Esophagus muscularis mucosa (tissue), 4 donors: ENCODE measurements at regions of chr1 and their contacts with region 1.

Region 1: GRCh38 chr1:26602378-26602959 is 72.9 kb downstream of the RPS6KA1 start:
- DNase-seq: no peak
- H3K4me3 ChIP-seq: no peak overlapping the region
- H3K27ac ChIP-seq: peak overlapping the region in 3 of 4 donors; percentile 23 to 51 (median 36)
- H3K4me1 ChIP-seq: peaks cover 0 to 29% (median 22%) of the 10 kb centered on the region in 4 donors
- H3K27me3 ChIP-seq: no peaks in the 10 kb centered on the region
- CTCF ChIP-seq: peak; percentile 86 to 95 (median 87)
- EP300 ChIP-seq: no peak
- POLR2A ChIP-seq: no peak

Region 2: GRCh38 chr1:26500488-26501175 is 101.8 kb before region 1 on chr1:
- intact Hi-C with region 1: loop called (anchors 10 kb)
- DNase-seq: peak; percentile 95
- H3K4me3 ChIP-seq: peak overlapping the region; percentile 68 to 85 (median 72)
- H3K27ac ChIP-seq: peak overlapping the region; percentile 89 to 93 (median 90)
- H3K4me1 ChIP-seq: peaks cover 10 to 23% (median 21%) of the 10 kb centered on the region in 4 donors
- H3K27me3 ChIP-seq: no peaks in the 10 kb centered on the region
- CTCF ChIP-seq: peak in 1 of 3 experiments; percentile 20
- EP300 ChIP-seq: no peak
- POLR2A ChIP-seq: peak; percentile 18

Region 3: GRCh38 chr1:26677306-26678115 is 75.0 kb after region 1 on chr1:
- intact Hi-C with region 1: loop called (anchors 1 kb)
- DNase-seq: peak; percentile 92
- H3K4me3 ChIP-seq: peak overlapping the region in 3 of 4 donors; percentile 22 to 25 (median 23)
- H3K27ac ChIP-seq: peak overlapping the region; percentile 1 to 45 (median 30)
- H3K4me1 ChIP-seq: peaks cover 4 to 13% (median 12%) of the 10 kb centered on the region in 4 donors
- H3K27me3 ChIP-seq: no peaks in the 10 kb centered on the region
- CTCF ChIP-seq: peak; percentile 65 to 87 (median 78)
- EP300 ChIP-seq: no peak
- POLR2A ChIP-seq: no peak

Region 4: DNA sequence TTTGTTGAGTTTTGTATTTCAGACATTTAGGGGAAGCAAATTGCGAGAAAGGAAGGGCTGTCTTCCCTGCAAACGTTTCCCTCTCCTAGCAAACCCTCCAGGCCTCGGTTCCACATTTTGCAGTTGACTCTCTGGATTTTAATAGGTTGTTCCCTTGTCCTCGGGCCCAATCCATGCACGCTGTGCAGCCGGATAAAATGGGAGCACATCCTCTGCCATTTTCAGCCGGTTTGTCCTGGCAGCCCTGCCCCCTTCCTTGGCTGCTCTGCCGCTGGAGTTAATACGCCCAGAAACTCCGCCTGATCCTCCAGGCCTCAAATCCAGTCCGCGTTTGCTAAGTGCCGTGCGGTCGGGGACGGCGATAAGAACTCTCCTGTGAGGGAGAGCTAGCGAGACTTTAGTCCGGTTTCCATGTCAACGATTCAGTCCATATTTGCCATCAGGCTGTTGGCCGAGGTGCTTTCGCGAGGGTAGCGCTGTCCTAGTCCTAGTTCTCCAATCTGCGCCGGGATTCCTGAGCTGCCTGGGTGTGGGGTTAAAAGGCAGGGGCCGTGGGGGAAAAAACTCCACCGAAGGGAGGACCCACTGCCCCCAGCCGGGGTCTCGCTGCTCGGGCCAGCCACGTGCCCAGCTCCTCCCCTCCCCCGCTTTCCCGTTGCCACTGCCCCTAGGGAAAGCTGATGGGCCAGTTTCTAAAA is 90.5 kb after region 1 on chr1:
- intact Hi-C with region 1: loop called (anchors 5 kb)
- DNase-seq: peak; percentile 96
- H3K4me3 ChIP-seq: peak overlapping the region; percentile 55 to 68 (median 63)
- H3K27ac ChIP-seq: peak overlapping the region; percentile 96 to 99 (median 98)
- H3K4me1 ChIP-seq: peaks cover 24 to 41% (median 38%) of the 10 kb centered on the region in 4 donors
- H3K27me3 ChIP-seq: peaks cover 0 to 4% (median 0%) of the 10 kb centered on the region in 4 donors
- CTCF ChIP-seq: no peak
- EP300 ChIP-seq: no peak
- POLR2A ChIP-seq: peak; percentile 53

Region 5: DNA sequence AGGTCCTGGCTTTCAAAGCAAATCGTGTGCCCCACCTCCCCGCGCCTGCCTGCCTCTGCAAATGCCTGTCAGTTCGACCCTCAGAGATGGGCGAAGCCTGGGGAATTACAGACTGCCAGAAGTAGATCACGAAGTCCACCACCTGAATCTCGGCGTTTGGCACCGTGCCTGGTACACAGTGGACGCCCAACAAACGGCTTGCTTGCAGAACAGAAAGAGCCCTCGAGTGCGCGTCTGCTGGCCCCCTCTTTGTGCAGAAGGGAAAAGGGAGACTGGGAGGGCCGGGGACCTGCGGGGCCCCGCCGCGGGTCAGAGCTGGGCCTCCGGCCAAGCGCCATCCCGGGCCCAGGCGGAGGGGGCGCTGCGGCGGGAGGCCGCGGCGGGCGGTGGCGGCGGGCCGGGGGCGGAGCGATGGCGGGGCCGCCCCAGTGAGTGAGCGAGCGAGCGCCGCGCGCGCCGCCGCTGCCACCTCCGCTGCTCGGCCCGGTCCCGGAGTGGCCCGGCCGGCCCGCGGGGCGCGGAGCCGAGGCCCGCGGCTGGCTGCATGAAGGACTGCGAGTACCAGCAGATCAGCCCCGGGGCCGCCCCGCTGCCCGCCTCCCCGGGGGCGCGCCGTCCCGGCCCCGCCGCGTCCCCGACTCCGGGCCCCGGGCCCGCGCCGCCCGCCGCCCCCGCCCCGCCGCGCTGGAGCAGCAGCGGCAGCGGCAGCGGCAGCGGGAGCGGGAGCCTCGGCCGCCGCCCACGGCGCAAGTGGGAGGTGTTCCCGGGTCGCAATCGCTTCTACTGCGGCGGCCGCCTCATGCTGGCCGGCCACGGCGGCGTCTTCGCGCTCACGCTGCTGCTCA is 224.0 kb after region 1 on chr1 and contains the start of gene ZDHHC18:
- intact Hi-C with region 1: no loop called
- DNase-seq: no peak
- H3K4me3 ChIP-seq: peak within 1 kb of the TSS; percentile 71 to 84 (median 81)
- H3K27ac ChIP-seq: peak within 1 kb of the TSS; percentile 73 to 81 (median 80)
- H3K4me1 ChIP-seq: peaks cover 30 to 45% (median 44%) of the 10 kb centered on the region in 4 donors
- H3K27me3 ChIP-seq: no peaks in the 10 kb centered on the region
- CTCF ChIP-seq: peak; percentile 50 to 78 (median 65)
- EP300 ChIP-seq: no peak
- POLR2A ChIP-seq: no peak
- total RNA-seq, gene ZDHHC18: 9.6 to 31.7 (median 20.8) TPM